ENCODE measurements at regions of chr5 and their contacts with region 1.

Region 1: DNA sequence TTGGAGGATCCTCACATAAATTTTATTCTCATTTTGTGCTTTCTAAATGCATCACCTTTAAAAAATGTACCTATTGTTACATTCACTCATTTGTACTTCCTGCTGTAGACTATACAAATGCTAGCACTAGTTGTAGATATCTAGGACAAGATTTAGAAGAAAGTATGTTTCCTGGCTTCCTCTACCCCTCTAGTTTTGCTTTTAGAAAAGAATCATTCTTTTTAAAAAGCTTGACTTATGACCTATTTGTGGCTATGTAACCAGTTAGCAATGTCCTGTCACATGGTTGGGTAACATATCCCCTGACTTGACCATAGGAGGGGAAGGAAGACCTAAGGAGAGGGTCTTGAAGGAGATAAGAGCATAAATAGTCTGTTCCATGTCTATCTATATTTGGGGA is 13.3 kb downstream of the CAMK4 start:
- DNase-seq: no peak
- ATAC-seq: peak; percentile 5
- H3K4me3 ChIP-seq: no peak overlapping the region
- H3K27ac ChIP-seq: peak overlapping the region; percentile 79
- H3K4me1 ChIP-seq: peaks cover 45% of the 10 kb centered on the region
- H3K27me3 ChIP-seq: no peaks in the 10 kb centered on the region
- CTCF ChIP-seq: no peak
- EP300 ChIP-seq: no peak
- POLR2A ChIP-seq: no peak
- RAD21 ChIP-seq: no peak

Region 2: GRCh38 chr5:111248571-111248970 is 11.1 kb after region 1 on chr5:
- CTCF ChIA-PET with region 1: interaction called, 263 read pairs
- POLR2A ChIA-PET with region 1: interaction called, 172 read pairs
- RAD21 ChIA-PET with region 1: interaction called, 443 read pairs
- SMC1A ChIA-PET with region 1: interaction called, 608 read pairs
- in situ Hi-C with region 1: no loop called
- intact Hi-C with region 1: loop called (anchors 1 kb)
- DNase-seq: no peak
- ATAC-seq: no peak
- H3K4me3 ChIP-seq: no peak overlapping the region
- H3K27ac ChIP-seq: no peak overlapping the region
- H3K4me1 ChIP-seq: peaks cover 30% of the 10 kb centered on the region
- H3K27me3 ChIP-seq: no peaks in the 10 kb centered on the region
- CTCF ChIP-seq: no peak
- EP300 ChIP-seq: no peak
- POLR2A ChIP-seq: no peak
- RAD21 ChIP-seq: no peak

Region 3: DNA sequence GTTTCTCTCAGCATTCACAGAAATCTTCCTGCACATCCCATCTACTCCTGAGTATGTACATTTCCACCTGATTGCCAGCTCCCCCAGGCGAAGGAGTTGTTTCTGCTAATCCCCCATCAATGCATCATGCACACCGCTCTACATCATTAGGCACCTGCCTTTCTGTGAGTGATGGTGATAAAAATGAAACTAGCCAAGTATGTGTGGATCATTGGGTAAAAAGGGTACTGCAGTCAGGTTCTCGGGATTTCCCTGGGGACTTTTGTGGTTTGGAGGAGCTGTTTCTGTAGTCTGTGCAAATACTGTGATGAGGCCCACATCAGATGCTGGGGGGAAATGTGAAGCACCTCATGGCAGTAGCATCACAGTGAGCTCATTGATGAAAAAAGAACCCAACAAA is 17.1 kb after region 1 on chr5:
- CTCF ChIA-PET with region 1: interaction called, 263 read pairs
- POLR2A ChIA-PET with region 1: interaction called, 172 read pairs
- RAD21 ChIA-PET with region 1: interaction called, 443 read pairs
- SMC1A ChIA-PET with region 1: interaction called, 608 read pairs
- in situ Hi-C with region 1: no loop called
- intact Hi-C with region 1: loop called (anchors 1 kb)
- DNase-seq: peak; percentile 95
- ATAC-seq: peak; percentile 81
- H3K4me3 ChIP-seq: 0 out of 2 replicates have a peak overlapping the region, but pooled peaks have one; percentile 44
- H3K27ac ChIP-seq: peak overlapping the region; percentile 83
- H3K4me1 ChIP-seq: peaks cover 46% of the 10 kb centered on the region
- H3K27me3 ChIP-seq: no peaks in the 10 kb centered on the region
- CTCF ChIP-seq: no peak
- EP300 ChIP-seq: peak; percentile 94
- POLR2A ChIP-seq: peak; percentile 66
- RAD21 ChIP-seq: peak; percentile 30; the same call in 1 of the 2 replicates

Region 4: GRCh38 chr5:111411301-111411700 is 173.8 kb after region 1 on chr5:
- CTCF ChIA-PET with region 1: no interaction called
- POLR2A ChIA-PET with region 1: no interaction called
- RAD21 ChIA-PET with region 1: no interaction called
- SMC1A ChIA-PET with region 1: no interaction called
- in situ Hi-C with region 1: no loop called
- intact Hi-C with region 1: no loop called
- DNase-seq: no peak
- ATAC-seq: no peak
- H3K4me3 ChIP-seq: no peak overlapping the region
- H3K27ac ChIP-seq: no peak overlapping the region
- H3K4me1 ChIP-seq: no peaks in the 10 kb centered on the region
- H3K27me3 ChIP-seq: no peaks in the 10 kb centered on the region
- CTCF ChIP-seq: no peak
- EP300 ChIP-seq: no peak
- POLR2A ChIP-seq: no peak
- RAD21 ChIP-seq: no peak